ENCODE measurements at regions of chr2 and their contacts with region 1.

Region 1: DNA sequence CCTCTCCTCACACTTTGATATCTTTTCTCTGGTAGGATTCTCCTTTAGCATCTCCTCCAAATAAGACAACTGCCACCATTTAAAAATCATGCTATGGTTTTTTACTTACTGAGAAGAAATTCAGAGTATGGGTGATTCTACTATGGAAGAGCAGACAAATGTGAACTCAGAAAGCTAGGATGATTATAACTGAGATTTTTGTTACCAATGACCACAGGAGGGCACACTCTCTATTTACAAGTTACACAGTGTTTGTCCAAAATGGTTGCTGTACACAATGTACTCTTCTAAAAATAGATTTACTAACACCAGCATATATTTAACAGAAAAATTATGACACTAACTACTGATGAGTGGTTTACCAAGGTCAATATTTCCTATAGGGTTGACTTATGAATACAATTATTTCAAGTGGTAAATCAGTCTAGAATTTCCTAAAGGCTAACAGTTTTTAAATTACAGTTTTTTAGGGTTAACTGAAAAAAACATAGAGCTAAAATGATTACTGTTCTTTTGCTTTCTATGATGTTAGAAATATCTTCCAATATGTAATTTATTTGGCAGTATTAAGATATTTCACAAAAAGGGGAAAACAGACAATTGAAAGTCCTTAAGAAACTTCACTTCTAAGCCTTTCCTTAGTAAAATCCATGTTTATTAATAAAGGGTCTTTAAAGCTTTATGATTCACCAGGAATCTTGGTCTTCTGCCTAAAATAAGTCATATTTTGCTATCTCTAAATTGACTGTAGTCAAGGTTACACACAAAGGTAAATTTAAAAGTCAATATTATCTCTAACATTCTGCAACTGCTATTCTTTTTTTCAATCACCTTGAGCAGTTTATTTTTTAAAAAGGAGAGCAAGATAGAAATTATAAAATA is 57.2 kb downstream of the MAP4K3 start:
- DNase-seq: no peak
- H3K4me3 Mint-ChIP-seq: no peak overlapping the region
- H3K27ac Mint-ChIP-seq: no peak overlapping the region
- H3K4me1 Mint-ChIP-seq: peaks cover 9% of the 10 kb centered on the region
- H3K27me3 Mint-ChIP-seq: no peaks in the 10 kb centered on the region

Region 2: GRCh38 chr2:39368846-39369245 is 11.0 kb before region 1 on chr2:
- CTCF ChIA-PET with region 1: interaction called, 15 read pairs
- POLR2A ChIA-PET with region 1: interaction called, 3 read pairs
- DNase-seq: no peak
- H3K4me3 Mint-ChIP-seq: no peak overlapping the region
- H3K27ac Mint-ChIP-seq: no peak overlapping the region
- H3K4me1 Mint-ChIP-seq: peaks cover 11% of the 10 kb centered on the region
- H3K27me3 Mint-ChIP-seq: no peaks in the 10 kb centered on the region

Measured in activated CD4-positive, alpha-beta memory T cell treated with anti-CD3 and anti-CD28 coated beads, Interleukin-2, amount 10 ng/mL, durations not matched to agents 7 days and 5 days (primary cell).